OCI-LY7 (cell line): ENCODE measurements at regions of chr16 and their contacts with region 1.

Region 1: DNA sequence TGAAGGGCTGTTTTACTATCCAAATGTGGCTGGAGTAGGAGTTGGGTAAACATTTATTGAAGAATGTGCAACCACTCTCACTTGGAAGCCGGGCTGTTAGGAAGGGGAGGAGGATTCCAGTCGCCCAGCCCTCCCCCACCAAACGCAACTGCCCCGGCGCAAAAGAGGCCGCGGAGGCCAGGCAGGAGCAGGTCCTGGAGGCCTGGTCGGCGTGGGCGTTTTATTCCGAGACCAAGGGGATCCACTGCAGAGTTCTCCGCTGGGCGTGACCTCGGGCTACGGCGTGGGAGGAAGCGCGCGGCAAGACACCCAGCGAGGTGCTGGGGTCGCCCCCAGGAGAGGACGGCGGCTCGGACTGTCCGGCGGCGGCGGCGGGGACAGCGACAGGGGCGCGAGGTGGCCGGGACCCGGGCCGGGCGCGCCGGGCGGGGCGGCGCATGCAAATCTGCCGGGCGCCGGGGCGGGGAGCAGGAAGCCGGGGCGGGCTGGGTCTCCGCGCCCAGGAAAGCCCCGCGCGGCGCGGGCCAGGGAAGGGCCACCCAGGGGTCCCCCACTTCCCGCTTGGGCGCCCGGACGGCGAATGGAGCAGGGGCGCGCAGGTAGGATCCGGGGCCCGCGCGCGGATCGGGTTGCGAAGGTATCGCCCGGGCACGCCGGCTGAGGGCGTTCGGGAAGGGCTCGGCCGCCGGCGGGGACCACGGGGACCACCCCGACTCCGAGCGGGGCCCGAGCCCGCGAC is at the start of gene IL4R:
- DNase-seq: peak; percentile 72
- H3K4me3 ChIP-seq: peak within 1 kb of the TSS; percentile 93
- H3K27ac ChIP-seq: peak within 1 kb of the TSS; percentile 30
- H3K4me1 ChIP-seq: peaks cover 54% of the 10 kb centered on the region
- CTCF ChIP-seq: no peak
- total RNA-seq, gene IL4R: 33.0 and 82.8 TPM in 2 replicates

Region 2: GRCh38 chr16:27455700-27456099 is 142.1 kb after region 1 on chr16:
- CTCF ChIA-PET with region 1: no interaction called
- POLR2A ChIA-PET with region 1: no interaction called
- intact Hi-C with region 1: loop called (anchors 5 kb)
- DNase-seq: no peak
- H3K4me3 ChIP-seq: no peak overlapping the region
- H3K27ac ChIP-seq: no peak overlapping the region
- H3K4me1 ChIP-seq: peaks cover 19% of the 10 kb centered on the region
- CTCF ChIP-seq: no peak